PC-3 (cell line): ENCODE measurements at regions of chr3 and their contacts with region 1.

Region 1: GRCh38 chr3:120506828-120507774 is 56.3 kb upstream of the FSTL1 start:
- DNase-seq: peak; percentile 84
- ATAC-seq: peak; percentile 88
- H3K4me3 ChIP-seq: peak overlapping the region; percentile 33; the same call in 1 of the 2 replicates
- H3K27ac ChIP-seq: peak overlapping the region; percentile 72
- H3K4me1 ChIP-seq: peaks cover 22% of the 10 kb centered on the region
- H3K27me3 ChIP-seq: no peaks in the 10 kb centered on the region
- CTCF ChIP-seq: peak; percentile 94

Region 2: GRCh38 chr3:120438665-120439370 is 68.3 kb before region 1 on chr3:
- CTCF ChIA-PET with region 1: interaction called, 3 read pairs
- POLR2A ChIA-PET with region 1: no interaction called
- intact Hi-C with region 1: loop called (anchors 2 kb)
- DNase-seq: peak; percentile 89
- ATAC-seq: peak; percentile 77
- H3K4me3 ChIP-seq: peak overlapping the region; percentile 8; the same call in 1 of the 2 replicates
- H3K27ac ChIP-seq: peak overlapping the region; percentile 74
- H3K4me1 ChIP-seq: peaks cover 79% of the 10 kb centered on the region
- H3K27me3 ChIP-seq: no peaks in the 10 kb centered on the region
- CTCF ChIP-seq: no peak

Region 3: GRCh38 chr3:120450600-120451271 is 56.4 kb before region 1 on chr3 and contains the start of gene FSTL1:
- CTCF ChIA-PET with region 1: interaction called, 3 read pairs
- POLR2A ChIA-PET with region 1: interaction called, 3 read pairs
- intact Hi-C with region 1: loop called (anchors 1 kb)
- DNase-seq: peak; percentile 45
- ATAC-seq: peak; percentile 49
- H3K4me3 ChIP-seq: peak within 1 kb of the TSS; percentile 81
- H3K27ac ChIP-seq: peak within 1 kb of the TSS; percentile 25
- H3K4me1 ChIP-seq: peaks cover 38% of the 10 kb centered on the region
- H3K27me3 ChIP-seq: no peaks in the 10 kb centered on the region
- CTCF ChIP-seq: no peak
- total RNA-seq, gene FSTL1: 178 and 185 TPM in 2 replicates

Region 4: GRCh38 chr3:120470870-120471269 is 36.2 kb before region 1 on chr3:
- CTCF ChIA-PET with region 1: interaction called, 5 read pairs
- POLR2A ChIA-PET with region 1: no interaction called
- intact Hi-C with region 1: loop called (anchors 2 kb)
- DNase-seq: no peak
- ATAC-seq: peak; percentile 9
- H3K4me3 ChIP-seq: no peak overlapping the region
- H3K27ac ChIP-seq: no peak overlapping the region
- H3K4me1 ChIP-seq: peaks cover 43% of the 10 kb centered on the region
- H3K27me3 ChIP-seq: no peaks in the 10 kb centered on the region
- CTCF ChIP-seq: no peak

Region 5: GRCh38 chr3:120795017-120795648 is 288.0 kb after region 1 on chr3:
- CTCF ChIA-PET with region 1: no interaction called
- POLR2A ChIA-PET with region 1: no interaction called
- intact Hi-C with region 1: loop called (anchors 5 kb)
- DNase-seq: peak; percentile 93
- ATAC-seq: peak; percentile 65
- H3K4me3 ChIP-seq: no peak overlapping the region
- H3K27ac ChIP-seq: 0 out of 2 replicates have a peak overlapping the region, but pooled peaks have one; percentile 3
- H3K4me1 ChIP-seq: peaks cover 28% of the 10 kb centered on the region
- H3K27me3 ChIP-seq: no peaks in the 10 kb centered on the region
- CTCF ChIP-seq: peak; percentile 99